ENCODE measurements at regions of chr19 and their contacts with region 1.

Region 1: GRCh38 chr19:39125554-39126311 is at the start of gene PAK4:
- DNase-seq: peak; percentile 96 to 99 (median 98)
- H3K4me3 ChIP-seq: peak within 1 kb of the TSS; percentile 63 to 97 (median 88)
- H3K27ac ChIP-seq: peak within 1 kb of the TSS in 57 of 59 donors; percentile 35 to 94 (median 84)
- H3K27me3 ChIP-seq: no peaks in the 10 kb centered on the region
- CTCF ChIP-seq: peak in 28 of 56 donors; percentile 5 to 58 (median 28)
- total RNA-seq, gene PAK4: 16.4 to 55.2 (median 25.7) TPM

Region 2: DNA sequence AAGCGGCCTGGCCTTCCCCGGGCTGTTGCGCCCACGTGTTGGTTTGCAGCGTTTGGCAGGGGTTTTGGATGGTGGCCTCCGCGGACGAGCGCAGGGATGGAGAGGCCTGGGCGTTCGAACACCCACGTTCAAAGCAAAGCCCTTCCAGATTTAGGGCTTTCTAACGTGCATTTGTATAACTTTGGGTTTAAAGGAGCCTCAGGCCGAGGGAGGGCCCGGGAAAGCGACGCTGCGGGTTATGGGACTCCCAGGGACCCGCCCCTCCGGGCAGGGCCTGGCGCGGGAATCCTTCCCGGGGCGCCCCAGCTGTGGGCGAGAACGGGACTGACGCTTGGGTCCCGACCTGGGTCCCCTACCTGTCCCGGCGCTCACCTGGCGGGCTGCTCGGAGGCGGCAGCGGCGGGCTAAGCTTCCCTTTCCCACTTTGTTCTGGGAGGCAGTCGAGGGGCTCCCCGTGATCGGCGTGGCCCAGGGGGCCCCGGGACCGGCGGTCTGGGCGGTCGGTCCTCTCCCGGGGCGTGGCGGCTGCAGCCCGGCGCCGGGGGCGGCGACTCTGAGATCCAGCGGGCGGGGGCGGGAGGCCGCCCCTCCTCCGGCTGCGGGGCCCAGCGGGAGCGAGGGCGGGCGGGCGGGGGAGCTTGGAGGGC is 150.4 kb before region 1 on chr19 and contains the start of gene FBXO17:
- intact Hi-C with region 1: loop called in 1 of 2 experiments (anchors 10 kb)
- DNase-seq: peak in 9 of 10 donors; percentile 29 to 85 (median 69)
- H3K4me3 ChIP-seq: peak within 1 kb of the TSS; percentile 40 to 97 (median 69)
- H3K27ac ChIP-seq: peak within 1 kb of the TSS in 58 of 59 donors; percentile 3 to 96 (median 86)
- H3K27me3 ChIP-seq: no peaks in the 10 kb centered on the region
- CTCF ChIP-seq: peak in 1 of 56 donors; percentile 6
- total RNA-seq, gene FBXO17: 10.0 to 30.0 (median 17.7) TPM

Region 3: GRCh38 chr19:39014037-39014436 is 111.7 kb before region 1 on chr19:
- intact Hi-C with region 1: no loop called
- DNase-seq: peak in 1 of 10 donors; percentile 57
- H3K4me3 ChIP-seq: no peak overlapping the region
- H3K27ac ChIP-seq: peak overlapping the region in 2 of 59 donors; percentile 27 to 37
- H3K27me3 ChIP-seq: no peaks in the 10 kb centered on the region
- CTCF ChIP-seq: no peak

Region 4: DNA sequence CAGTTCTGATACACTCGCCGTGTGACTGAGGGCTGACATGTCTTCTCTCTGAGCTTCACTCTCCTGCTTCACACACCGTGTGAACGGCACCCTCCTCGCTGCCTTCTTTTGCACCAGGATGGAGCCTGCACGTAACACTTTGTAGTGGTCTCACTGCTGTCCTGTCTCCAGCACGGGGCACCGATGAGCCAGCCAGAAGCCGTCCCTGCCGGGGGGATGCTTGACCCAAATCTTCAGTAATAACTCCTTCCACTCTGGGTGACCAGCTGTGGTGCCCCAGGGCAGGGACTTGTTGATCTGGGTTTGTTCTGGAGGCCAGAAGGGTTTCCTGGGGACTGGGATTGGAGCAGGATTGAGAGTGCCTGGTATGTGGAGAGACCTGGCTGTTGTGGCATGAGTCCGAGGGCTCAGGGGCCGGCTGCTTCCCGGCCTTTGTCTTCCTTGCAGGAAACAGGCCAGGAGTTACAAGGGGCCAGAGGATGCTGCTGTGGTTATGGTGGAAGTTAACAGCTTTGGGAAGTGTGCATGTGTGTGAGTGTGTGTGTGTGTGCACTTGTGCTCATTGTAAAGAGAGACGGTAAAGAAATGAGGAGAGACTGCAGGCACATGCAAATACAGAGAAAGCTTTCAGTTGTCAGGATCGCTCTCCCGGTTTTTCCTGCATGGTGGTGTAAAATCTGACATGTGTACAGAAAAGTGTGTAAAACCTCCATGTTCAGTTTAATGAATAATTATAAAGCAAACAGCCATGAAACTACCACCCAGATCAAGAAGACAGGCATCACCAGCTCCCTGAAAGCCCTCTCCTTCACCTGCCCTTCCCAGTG is 18.7 kb after region 1 on chr19:
- intact Hi-C with region 1: loop called in 1 of 2 experiments (anchors 2 kb)
- DNase-seq: peak in 1 of 10 donors; percentile 22
- H3K4me3 ChIP-seq: peak overlapping the region in 40 of 59 donors; percentile 7 to 57 (median 34)
- H3K27ac ChIP-seq: peak overlapping the region; percentile 72 to 98 (median 92)
- H3K27me3 ChIP-seq: no peaks in the 10 kb centered on the region
- CTCF ChIP-seq: no peak

Region 5: GRCh38 chr19:39187559-39187957 is 61.8 kb after region 1 on chr19:
- intact Hi-C with region 1: loop called (anchors 5 to 10 kb)
- DNase-seq: no peak
- H3K4me3 ChIP-seq: no peak overlapping the region
- H3K27ac ChIP-seq: no peak overlapping the region
- H3K27me3 ChIP-seq: no peaks in the 10 kb centered on the region
- CTCF ChIP-seq: peak in 14 of 56 donors; percentile 0 to 40 (median 8)

Region 6: DNA sequence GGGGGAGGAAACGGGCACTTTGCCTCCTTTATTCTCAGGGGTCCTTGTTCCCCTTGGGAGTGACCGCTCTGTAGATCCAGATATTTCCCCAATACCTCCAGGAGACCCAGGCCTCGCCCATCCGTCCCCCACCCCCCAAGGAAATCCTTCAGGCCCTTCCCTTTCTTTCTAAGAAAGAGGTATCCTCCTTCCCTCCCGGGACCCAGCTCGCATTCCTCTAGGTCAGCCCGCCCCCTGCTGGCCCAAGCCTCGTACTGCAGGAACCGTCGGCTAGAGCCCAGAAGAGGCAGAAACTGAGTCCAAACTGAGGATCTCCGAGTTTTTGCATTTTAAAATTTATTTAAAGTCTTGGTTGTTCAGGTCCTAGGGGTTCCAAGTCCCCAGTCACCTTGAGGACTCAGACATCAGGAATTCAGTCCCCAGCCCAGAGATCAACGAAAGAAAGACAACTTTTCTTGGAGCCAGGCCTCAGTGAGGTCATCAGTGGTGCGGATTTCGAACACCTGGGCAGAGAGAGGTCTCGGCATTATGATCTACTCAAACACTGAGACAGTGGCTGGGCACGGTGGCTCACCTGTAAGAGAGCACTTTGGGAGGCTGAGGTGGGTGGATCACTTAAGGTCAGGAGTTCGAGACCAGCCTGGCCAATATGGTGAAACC is 202.4 kb after region 1 on chr19:
- intact Hi-C with region 1: loop called (anchors 2 to 5 kb)
- DNase-seq: peak; percentile 82 to 94 (median 91)
- H3K4me3 ChIP-seq: peak overlapping the region in 2 of 59 donors; percentile 1 to 11
- H3K27ac ChIP-seq: peak overlapping the region in 3 of 59 donors; percentile 12 to 53 (median 28)
- H3K27me3 ChIP-seq: no peaks in the 10 kb centered on the region
- CTCF ChIP-seq: peak; percentile 77 to 99 (median 96)

Region 7: DNA sequence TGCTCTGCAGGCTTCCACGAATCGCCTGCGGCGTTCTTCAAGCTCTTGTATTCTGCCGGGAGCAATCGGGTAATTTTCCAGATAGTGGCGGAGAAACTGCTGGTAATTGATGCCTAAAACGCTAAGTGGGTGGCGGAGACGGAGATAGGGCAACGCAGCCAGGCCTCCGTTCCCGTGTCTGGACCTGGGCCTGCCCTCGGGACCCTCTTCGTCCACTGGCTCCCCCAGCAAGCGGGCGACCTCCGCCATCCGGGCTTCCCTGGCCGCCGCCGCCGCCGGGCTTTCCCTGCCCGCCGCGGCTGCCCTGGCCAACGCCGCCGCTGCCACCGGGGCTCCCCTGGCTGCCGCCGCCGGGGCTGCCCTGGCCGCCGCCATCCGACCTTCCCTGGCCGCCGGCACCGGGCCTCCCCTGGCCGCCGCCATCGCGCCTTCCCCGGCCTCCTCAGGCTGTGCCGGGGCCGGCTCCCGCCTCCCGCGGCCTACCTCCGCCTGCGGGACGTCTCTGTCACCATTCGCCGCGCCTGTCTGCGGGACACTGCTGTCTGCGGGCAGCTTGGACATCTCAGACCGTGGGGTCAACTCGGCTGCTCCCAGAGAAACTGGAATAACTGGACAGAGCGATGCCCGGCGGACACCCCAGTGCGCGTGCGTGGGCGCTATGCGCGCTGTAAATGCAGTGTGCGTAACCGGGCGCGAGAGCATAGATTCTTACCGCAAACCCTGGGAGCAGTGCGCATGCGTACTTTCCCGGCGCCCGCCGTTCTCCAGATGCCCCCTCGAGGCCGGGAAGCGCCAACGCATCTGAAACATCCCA is 414.0 kb after region 1 on chr19 and contains the start of gene EID2:
- intact Hi-C with region 1: loop called in 1 of 2 experiments (anchors 10 kb)
- DNase-seq: peak; percentile 93 to 97 (median 94)
- H3K4me3 ChIP-seq: peak within 1 kb of the TSS; percentile 53 to 96 (median 83)
- H3K27ac ChIP-seq: peak within 1 kb of the TSS; percentile 75 to 99 (median 94)
- H3K27me3 ChIP-seq: no peaks in the 10 kb centered on the region
- CTCF ChIP-seq: peak; percentile 66 to 99 (median 96)
- total RNA-seq, gene EID2: 12.7 to 42.3 (median 28.5) TPM